Mammary epithelial cell (primary cell): ENCODE measurements at regions of chr1 and their contacts with region 1.

Region 1: DNA sequence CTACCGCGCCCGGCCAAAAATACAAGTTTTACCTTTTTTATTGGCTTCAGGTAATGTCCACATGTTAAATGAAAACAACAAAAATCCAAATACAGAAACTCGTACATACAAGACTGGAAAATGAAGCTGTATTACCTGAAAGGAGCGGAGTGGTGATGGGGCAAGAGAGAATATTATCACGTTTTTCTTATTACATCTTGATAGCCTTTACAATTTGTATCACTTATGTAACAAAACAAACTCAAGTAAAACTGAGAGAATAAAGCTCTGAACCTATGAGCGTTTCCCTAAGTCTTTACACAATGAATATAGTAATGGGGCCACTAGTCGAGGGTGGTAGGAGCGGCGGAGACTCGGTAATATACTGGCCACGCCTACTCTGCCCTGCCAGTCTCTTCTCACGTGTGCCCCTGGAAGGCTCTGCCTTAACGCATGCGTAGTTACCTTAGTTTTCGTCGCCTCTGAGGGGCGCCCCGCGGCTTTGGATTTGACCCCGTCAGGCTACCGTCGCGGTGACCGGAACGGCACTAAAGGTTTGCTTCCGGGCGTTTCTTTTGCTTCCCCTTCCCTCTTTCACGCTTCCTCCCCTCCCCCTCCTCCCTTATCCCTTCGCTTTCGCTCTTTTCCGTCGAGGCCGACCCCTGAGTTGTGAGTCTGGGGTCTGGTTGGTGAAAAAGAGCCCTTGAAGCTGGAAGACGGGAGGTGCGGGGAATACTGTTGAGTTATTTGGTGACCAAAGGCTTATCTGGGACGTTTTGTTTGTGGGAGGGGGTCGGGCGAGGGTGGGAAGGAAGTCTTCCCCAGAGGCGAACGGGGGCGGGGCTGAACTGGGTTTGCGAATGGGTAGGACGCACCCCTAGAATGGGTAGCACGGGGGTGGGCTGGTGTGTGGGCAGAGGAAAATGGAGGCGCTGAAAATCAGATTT is at the start of gene SETDB1:
- DNase-seq: peak; percentile 92
- H3K4me3 ChIP-seq: peak within 1 kb of the TSS; percentile 70 to 100 (median 88)
- H3K27ac ChIP-seq: peak within 1 kb of the TSS; percentile 75
- H3K4me1 ChIP-seq: peaks cover 11% of the 10 kb centered on the region
- H3K27me3 ChIP-seq: no peaks in the 10 kb centered on the region
- CTCF ChIP-seq: peak in 1 of 2 donors; percentile 23
- total RNA-seq, gene SETDB1: 30.3 TPM

Region 2: DNA sequence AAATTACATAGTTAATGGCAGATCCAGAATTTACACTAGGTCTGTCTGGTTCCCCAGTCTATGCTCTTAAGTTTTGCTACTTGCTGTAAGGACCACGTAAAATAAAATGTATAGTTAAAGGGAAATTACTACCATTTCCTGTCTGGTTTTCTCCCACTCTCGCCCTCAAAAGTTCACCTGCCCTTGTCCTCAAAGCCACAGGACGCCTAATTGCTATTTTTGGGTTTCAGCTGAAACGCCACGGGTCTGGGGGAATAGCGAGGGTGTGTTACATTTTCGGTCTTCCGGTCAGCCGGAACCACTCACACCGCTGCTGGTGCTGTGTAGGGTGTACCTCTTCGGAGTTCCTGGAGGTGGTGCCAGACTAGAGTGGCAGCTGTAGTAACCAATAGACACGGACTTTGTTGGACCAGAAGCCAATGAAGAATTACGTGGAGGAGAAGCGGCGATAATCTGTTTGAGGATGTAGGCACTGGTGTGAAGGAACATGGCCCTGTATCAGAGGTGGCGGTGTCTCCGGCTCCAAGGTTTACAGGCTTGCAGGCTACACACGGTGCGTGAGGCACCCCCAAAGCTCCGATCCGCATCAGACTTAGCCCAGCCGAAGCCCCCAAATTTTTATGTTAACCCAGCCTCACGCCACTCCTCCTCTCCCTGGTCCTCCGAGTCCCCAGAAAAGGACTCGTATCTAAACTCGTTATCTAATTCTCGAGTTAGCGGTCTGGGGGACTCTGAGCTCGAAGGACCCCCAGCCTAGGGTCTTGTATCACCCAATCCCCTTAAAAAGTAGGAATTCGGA is 438.9 kb before region 1 on chr1 and contains the start of gene TARS2:
- CTCF ChIA-PET with region 1: no interaction called
- dilution Hi-C with region 1: no loop called
- in situ Hi-C with region 1: no loop called
- intact Hi-C with region 1: loop called (anchors 10 kb)
- DNase-seq: peak; percentile 97
- H3K4me3 ChIP-seq: peak within 1 kb of the TSS; percentile 66 to 81 (median 69)
- H3K27ac ChIP-seq: peak within 1 kb of the TSS; percentile 83
- H3K4me1 ChIP-seq: peaks cover 16% of the 10 kb centered on the region
- H3K27me3 ChIP-seq: no peaks in the 10 kb centered on the region
- CTCF ChIP-seq: peak in 1 of 2 donors; percentile 29
- total RNA-seq, gene TARS2: 23.3 to 27.0 TPM

Region 3: DNA sequence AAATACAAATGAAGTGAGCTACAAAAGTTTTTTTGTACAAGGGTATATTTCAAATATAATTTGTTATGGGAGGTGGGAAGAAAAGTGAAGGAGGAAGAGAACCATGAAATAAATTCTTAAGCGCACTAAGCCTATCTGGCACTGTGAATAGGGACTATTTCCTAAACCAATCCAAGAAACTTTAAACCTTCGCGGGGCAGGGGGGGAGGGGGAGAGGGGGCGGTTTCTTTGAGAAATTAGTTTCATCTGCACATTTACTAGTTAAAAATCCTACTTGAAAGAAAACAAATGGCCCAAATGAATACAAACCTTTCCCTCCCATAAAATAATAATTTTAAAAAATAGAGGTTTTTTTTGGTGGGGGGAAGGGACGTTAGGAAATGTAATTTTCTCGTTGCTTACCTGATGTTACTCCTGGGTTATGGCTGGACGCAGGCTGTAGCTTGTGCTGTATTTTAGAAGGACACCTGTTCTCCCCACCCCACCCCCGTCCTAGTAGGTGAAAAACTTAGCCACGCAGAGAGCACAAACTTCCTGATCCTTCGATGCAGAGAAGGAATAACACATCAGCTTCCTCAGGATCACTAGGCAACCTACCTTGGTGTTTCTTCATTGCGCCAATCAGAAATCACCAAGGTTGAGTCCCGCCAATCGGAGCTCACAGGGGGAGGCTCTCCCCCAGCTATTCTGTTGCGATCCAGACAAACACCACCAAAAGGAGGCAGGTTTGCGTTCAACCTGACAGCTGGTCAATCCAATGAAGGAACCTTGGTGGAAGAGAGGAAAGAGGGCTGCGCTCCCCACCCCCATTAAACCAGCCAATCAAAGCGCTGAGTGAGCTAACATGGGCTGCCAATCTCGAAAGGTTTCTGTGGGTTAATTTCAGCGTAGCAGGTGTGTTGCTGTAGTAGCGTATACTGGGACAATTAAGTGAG is 229.2 kb before region 1 on chr1 and contains the start of gene GOLPH3L:
- CTCF ChIA-PET with region 1: no interaction called
- dilution Hi-C with region 1: no loop called
- in situ Hi-C with region 1: no loop called
- intact Hi-C with region 1: loop called (anchors 5 kb)
- DNase-seq: peak; percentile 100
- H3K4me3 ChIP-seq: peak within 1 kb of the TSS; percentile 59 to 90 (median 60)
- H3K27ac ChIP-seq: peak within 1 kb of the TSS; percentile 65
- H3K4me1 ChIP-seq: peaks cover 8% of the 10 kb centered on the region
- H3K27me3 ChIP-seq: no peaks in the 10 kb centered on the region
- CTCF ChIP-seq: peak in 1 of 2 donors; percentile 31
- total RNA-seq, gene GOLPH3L: 11.7 to 22.4 TPM

Region 4: GRCh38 chr1:150748878-150749719 is 177.0 kb before region 1 on chr1:
- CTCF ChIA-PET with region 1: no interaction called
- dilution Hi-C with region 1: no loop called
- in situ Hi-C with region 1: no loop called
- intact Hi-C with region 1: no loop called
- DNase-seq: peak; percentile 5
- H3K4me3 ChIP-seq: no peak overlapping the region
- H3K27ac ChIP-seq: no peak overlapping the region
- H3K4me1 ChIP-seq: peaks cover 9% of the 10 kb centered on the region
- H3K27me3 ChIP-seq: no peaks in the 10 kb centered on the region
- CTCF ChIP-seq: no peak

Region 5: DNA sequence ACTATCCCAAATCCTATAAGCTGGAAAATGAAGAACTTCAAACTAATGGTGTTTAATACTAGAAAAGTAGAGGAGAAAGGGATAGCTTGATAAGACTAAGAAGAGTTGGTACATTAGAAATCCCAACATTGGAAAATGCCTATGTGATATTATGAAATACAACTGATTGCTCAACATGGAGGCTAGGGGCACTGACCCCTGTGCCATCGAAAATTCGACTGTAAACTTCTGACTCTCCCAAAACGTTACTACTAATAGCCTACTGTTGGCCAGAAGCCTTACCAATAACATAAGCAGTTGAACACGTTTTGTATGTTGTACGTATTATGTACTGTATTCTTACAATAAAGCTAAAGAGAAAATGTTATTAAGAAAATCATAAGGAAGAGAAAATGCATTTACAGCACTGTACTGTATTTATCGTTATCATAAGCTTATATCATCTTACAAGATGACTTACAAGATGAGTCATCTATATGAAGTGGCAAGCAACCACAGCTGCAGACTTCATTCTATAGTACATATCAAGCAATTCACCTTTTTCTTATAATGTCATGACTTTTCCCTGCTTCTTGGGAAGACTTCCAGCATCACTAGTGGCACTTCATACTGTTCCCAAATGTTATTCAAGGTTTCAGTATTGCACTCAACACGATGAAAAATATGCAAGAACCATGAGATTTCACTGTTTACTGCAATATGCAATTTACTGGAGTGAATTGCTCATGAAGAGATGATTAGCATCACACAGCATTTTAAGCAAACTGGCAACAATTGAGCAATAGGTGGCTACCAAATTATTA is 105.2 kb before region 1 on chr1:
- CTCF ChIA-PET with region 1: no interaction called
- dilution Hi-C with region 1: no loop called
- in situ Hi-C with region 1: no loop called
- intact Hi-C with region 1: loop called (anchors 5 kb)
- DNase-seq: peak; percentile 23
- H3K4me3 ChIP-seq: no peak overlapping the region
- H3K27ac ChIP-seq: no peak overlapping the region
- H3K4me1 ChIP-seq: peaks cover 6% of the 10 kb centered on the region
- H3K27me3 ChIP-seq: no peaks in the 10 kb centered on the region
- CTCF ChIP-seq: no peak

Region 6: DNA sequence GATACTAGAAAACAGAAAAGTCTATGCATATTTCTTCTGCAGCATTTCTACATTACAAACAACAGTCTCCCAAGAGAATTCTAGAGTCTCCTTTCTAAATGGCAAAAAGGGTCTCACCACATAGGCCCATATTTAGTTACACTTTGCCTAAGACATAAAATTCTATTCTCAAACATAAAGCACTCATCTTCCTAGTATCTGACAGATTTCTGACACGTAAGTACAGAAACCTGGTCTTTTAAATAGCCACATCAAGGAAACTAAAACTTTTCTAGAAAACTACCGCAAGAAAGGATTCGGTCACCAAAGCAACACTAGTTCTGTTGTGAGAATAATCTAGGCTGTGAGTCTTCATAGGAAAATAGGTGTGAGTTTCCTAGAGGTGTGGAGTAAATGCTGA is 84.5 kb before region 1 on chr1:
- CTCF ChIA-PET with region 1: interaction called, 6 read pairs
- dilution Hi-C with region 1: no loop called
- in situ Hi-C with region 1: no loop called
- intact Hi-C with region 1: loop called (anchors 5 kb)
- DNase-seq: no peak
- H3K4me3 ChIP-seq: no peak overlapping the region
- H3K27ac ChIP-seq: no peak overlapping the region
- H3K4me1 ChIP-seq: no peaks in the 10 kb centered on the region
- H3K27me3 ChIP-seq: no peaks in the 10 kb centered on the region
- CTCF ChIP-seq: no peak

Region 7: GRCh38 chr1:150876119-150876454 is 50.0 kb before region 1 on chr1:
- CTCF ChIA-PET with region 1: interaction called, 20 read pairs
- dilution Hi-C with region 1: no loop called
- in situ Hi-C with region 1: no loop called
- intact Hi-C with region 1: loop called (anchors 1 kb)
- DNase-seq: peak; percentile 45
- H3K4me3 ChIP-seq: peak overlapping the region; percentile 82 to 94 (median 84)
- H3K27ac ChIP-seq: peak overlapping the region; percentile 68
- H3K4me1 ChIP-seq: peaks cover 17% of the 10 kb centered on the region
- H3K27me3 ChIP-seq: no peaks in the 10 kb centered on the region
- CTCF ChIP-seq: peak in 1 of 2 donors; percentile 5

Region 8: GRCh38 chr1:150974580-150975478 is 48.8 kb after region 1 on chr1 and contains the start of gene CERS2:
- CTCF ChIA-PET with region 1: no interaction called
- dilution Hi-C with region 1: no loop called
- in situ Hi-C with region 1: no loop called
- intact Hi-C with region 1: no loop called
- DNase-seq: peak; percentile 79
- H3K4me3 ChIP-seq: peak within 1 kb of the TSS; percentile 78 to 83 (median 80)
- H3K27ac ChIP-seq: peak within 1 kb of the TSS; percentile 32
- H3K4me1 ChIP-seq: peaks cover 47% of the 10 kb centered on the region
- H3K27me3 ChIP-seq: no peaks in the 10 kb centered on the region
- CTCF ChIP-seq: no peak
- total RNA-seq, gene CERS2: 113 to 169 TPM

Region 9: DNA sequence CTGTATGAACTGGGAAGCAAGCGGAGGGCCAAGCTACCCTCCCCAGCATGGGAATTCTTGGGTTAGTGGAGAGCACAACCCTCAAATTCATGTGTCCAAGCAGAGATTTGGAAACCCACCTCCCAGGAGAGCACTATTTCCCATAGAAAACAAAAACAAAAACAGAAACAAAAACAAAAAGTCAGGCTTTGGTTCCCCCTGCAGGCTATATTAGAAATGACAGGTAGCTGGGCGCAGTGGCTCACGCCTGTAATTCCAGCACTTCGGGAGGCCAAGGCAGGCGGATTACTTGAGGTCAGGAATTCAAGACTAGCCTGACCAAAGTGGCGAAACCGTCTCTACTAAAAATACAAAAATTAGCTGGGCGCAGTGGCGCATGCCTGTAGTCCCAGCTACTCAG is 69.8 kb after region 1 on chr1:
- CTCF ChIA-PET with region 1: no interaction called
- dilution Hi-C with region 1: no loop called
- in situ Hi-C with region 1: no loop called
- intact Hi-C with region 1: loop called (anchors 5 kb)
- DNase-seq: no peak
- H3K4me3 ChIP-seq: no peak overlapping the region
- H3K27ac ChIP-seq: no peak overlapping the region
- H3K4me1 ChIP-seq: no peaks in the 10 kb centered on the region
- H3K27me3 ChIP-seq: no peaks in the 10 kb centered on the region
- CTCF ChIP-seq: peak; percentile 42 to 59